ENCODE measurements at regions of chr1 and their contacts with region 1.

Region 1: DNA sequence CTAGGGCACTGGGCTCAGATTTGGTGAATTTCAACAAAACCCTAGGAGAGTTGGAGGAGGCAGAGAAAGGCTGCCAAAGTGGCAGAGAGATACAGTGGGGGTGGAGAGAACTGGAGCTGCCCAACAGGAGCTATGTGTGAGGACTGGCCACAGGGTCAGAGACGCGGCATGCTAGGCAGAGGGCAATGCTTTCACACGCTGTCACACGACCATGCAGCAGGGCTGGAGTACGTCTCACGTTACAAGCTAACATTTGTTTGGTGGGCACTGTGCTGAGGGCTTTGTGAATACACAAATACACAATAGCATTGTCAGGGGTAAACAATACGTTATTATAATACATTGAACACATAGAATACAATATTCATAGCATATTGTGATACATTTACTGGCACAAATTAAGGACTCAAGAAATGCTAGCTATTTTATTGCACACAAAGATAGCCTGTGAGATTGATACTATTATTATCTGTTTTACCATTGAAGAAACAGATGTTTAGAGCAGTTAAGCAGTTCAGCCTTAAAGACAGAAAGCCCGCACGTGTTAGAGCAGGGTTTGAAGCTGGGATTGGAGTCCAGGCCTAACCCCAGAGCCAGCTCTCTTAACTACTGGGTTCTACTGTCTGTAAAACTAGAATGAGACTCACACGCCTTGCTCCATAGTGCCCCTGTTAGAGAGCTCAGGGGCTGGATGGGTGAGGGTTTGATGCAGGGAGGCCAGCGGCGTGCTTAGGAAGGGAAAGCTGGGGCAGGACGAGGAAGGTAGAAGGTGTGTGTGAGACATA is 4.5 kb downstream of the RAB7B start:
- DNase-seq: peak; percentile 16
- H3K4me3 Mint-ChIP-seq: no peak overlapping the region
- H3K27ac Mint-ChIP-seq: no peak overlapping the region
- H3K4me1 Mint-ChIP-seq: no peaks in the 10 kb centered on the region
- H3K27me3 Mint-ChIP-seq: peaks cover 29% of the 10 kb centered on the region

Region 2: DNA sequence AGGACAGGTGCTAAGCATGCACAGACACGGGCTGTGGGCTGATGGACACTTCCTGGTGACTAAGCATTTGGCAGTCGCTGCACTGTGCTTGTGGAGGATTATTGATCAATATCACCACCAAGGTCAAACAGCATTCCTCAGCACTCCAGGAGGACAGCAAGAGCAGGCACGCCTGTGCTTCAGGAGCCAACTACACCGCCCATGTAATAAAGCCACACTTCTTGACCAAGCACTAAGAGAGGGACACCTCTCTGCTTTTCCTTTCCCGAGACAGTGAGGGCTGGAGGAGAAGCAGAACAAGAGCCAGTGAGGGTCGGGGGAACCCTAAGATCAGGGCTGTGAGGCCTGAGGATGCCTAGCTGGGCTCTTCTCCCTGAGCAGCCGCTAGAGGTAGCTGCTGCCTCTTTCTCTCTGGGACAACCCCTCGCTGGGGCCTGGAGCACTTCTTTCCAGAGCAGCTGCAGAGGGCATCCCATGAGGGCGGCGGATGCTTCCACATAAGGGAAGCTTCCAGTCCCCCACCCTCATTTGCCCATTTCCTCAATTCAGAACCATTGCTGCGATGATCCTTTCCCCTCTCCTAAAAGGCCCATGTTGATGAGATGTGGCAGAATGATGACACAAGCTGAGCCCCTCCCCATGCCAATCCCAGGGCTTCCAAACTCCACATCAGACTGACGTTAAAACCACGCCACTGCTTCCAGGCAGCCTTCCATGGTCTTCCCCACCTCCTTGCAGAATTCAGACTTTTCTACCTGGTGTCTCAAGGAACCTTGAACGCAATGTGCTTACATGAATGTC is 14.5 kb before region 1 on chr1:
- CTCF ChIA-PET with region 1: interaction called, 10 read pairs
- DNase-seq: peak; percentile 47
- H3K4me3 Mint-ChIP-seq: no peak overlapping the region
- H3K27ac Mint-ChIP-seq: no peak overlapping the region
- H3K4me1 Mint-ChIP-seq: no peaks in the 10 kb centered on the region
- H3K27me3 Mint-ChIP-seq: peaks cover 2% of the 10 kb centered on the region